ENCODE measurements at regions of chr7 and their contacts with region 1.

Region 1: DNA sequence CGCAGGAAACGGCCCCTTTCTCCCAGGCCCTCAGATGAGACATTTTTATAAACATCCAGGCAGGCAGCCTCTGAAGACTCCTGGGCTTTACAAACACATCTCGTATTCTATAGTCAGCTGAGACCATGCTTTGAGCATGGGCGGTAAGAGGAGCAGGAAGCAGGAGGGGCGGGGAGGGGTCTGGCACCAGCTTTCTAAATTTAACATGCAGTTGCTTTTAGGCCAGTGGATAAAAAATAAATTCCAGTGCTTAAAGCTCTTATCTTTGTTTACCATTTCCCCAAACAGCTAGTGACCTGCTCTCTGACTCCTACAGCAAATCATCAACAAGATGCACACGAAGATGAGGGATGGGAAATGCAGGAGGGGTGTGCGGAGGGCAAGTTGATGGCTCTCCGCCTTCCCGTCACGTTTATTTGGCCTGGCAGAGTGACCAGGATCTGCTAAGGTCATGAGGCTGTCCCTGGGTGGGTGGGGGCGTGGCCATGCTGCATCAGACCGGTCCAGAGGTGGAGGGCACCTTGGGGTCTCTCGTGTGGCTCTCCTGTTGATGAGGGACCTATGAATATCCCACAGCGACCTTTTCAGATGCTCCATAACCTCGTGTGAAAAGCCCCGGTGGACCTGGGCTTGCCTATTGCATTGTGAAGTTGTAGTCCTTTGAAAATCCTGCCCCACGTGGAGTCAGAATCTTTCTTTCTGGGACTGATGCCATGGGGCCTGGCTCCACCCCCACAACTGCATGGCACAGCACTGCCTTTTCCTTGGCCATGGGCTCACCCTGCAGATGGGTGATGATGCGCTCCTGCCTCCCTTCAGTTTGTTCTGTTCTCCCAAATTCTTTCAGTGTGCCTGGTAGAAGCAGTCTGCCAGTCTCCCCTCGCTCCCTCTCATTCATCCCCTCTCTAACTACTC is 67.5 kb downstream of the PARP12 start:
- DNase-seq: peak in 2 of 4 donors; percentile 47 to 75
- ATAC-seq: no peak
- H3K4me3 ChIP-seq: no peak overlapping the region
- H3K27ac ChIP-seq: peak overlapping the region in 1 of 2 donors; percentile 23
- H3K4me1 ChIP-seq: no peaks in the 10 kb centered on the region
- H3K27me3 ChIP-seq: no peaks in the 10 kb centered on the region
- CTCF ChIP-seq: no peak

Region 2: DNA sequence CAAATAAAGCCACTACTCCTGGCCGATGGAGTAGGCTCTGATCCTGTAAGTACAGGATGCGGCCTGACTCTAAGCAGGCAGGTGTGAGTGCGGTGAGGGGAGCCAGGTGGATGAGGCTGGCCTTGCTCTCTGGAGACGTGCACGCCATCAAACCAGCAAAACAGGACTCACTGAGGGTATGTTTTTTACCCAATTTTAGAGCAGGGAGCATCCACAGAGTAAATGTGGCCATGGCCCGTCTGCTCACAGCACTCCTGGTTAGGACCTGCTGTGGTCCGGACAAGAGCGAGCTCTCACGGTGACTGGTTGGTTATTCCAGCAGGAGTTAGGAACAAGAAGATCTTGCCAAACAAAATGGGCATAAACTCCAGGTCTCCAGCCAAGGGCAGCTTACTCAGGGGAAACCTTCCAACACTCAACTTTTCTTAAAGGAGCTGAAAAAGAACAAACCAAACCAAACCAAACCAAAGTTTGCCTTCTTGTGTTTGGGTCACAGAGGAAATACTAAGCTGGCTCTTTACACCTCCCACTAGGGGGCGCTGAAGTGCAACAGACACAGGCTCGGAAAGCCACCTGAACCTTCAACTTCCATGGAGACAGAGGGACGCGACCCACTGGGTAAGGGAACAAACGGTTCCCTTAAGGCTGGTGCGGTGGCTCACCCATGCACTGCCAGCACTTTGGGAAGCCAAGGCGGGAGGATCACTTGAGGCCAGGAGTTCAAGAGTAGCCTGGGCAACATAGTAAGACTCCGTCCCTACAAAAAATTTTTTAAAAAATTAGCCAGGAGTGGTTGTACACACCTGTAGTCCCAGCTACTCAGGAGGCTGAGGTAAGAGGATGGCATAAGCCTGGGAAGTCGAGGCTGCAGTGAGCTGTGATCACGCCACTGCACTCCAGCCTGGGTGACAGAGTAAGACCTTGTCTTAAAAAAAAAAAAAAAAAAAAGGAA is 349.4 kb before region 1 on chr7:
- intact Hi-C with region 1: loop called in 1 of 2 experiments (anchors 5 kb)
- DNase-seq: peak; percentile 64 to 86 (median 81)
- ATAC-seq: peak; percentile 86
- H3K4me3 ChIP-seq: no peak overlapping the region
- H3K27ac ChIP-seq: peak overlapping the region in 1 of 2 donors; percentile 80
- H3K4me1 ChIP-seq: peaks cover 0 to 63% of the 10 kb centered on the region in 2 donors
- H3K27me3 ChIP-seq: no peaks in the 10 kb centered on the region
- CTCF ChIP-seq: peak; percentile 82 to 87